GM12878 (cell line): ENCODE measurements at regions of chrX and their contacts with region 1.

Region 1: DNA sequence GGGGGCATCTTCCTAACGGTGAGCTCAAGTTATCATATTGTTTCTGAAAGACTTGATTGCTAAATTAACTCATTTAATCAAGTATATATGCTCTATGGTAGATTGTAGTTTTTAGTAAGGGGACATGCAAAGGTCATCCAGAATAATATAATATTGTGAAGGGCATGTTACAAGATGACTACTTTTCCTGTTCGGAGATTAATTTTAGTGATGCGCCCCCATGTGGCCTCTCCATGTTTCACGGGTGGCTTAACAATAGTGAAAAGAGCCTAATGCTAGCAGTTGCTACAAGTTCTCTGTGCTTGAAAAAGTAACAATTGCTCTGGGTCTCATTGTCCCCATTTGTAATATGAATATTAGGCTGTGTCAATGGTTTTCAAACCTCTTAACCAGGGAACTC is 12.2 kb downstream of the SMPX start:
- DNase-seq: no peak
- ATAC-seq: peak; percentile 79
- H3K4me3 ChIP-seq: no peak overlapping the region
- H3K27ac ChIP-seq: no peak overlapping the region
- H3K4me1 ChIP-seq: no peaks in the 10 kb centered on the region
- H3K27me3 ChIP-seq: no peaks in the 10 kb centered on the region
- CTCF ChIP-seq: peak; percentile 58 to 72 (median 63)
- EP300 ChIP-seq: no peak
- POLR2A ChIP-seq: no peak
- RAD21 ChIP-seq: peak; percentile 56

Region 2: DNA sequence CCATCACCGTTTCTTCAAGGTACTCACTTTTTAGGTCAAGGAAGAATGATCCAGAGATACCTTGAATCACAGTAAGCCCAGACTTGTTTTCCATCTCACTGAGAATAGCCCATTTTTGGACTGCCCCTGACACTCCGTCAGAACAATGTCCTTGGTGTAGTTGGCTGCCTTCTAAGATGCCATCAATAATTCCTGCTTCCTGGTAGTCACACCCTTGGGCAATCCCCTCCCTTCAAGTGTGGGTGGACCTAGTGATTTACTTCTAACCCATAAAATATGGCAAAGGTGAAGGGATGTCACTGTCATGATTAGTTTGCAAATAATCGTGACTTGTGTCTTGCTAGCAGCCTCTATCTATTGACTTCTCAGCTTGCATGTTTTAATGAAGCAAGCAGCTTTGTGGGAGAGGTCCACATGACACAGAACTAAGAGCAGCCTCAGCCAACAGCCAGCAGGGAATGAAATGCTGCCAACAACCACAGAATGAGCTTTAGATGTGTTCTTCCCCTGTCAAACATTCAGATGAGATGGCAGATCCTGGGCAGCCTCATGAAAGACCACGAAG is 67.6 kb before region 1 on chrX:
- CTCF ChIA-PET with region 1: no interaction called
- POLR2A ChIA-PET with region 1: no interaction called
- RAD21 ChIA-PET with region 1: no interaction called
- SMC1A ChIA-PET with region 1: no interaction called
- in situ Hi-C with region 1: no loop called
- intact Hi-C with region 1: no loop called
- DNase-seq: no peak
- ATAC-seq: no peak
- H3K4me3 ChIP-seq: no peak overlapping the region
- H3K27ac ChIP-seq: no peak overlapping the region
- H3K4me1 ChIP-seq: no peaks in the 10 kb centered on the region
- H3K27me3 ChIP-seq: no peaks in the 10 kb centered on the region
- CTCF ChIP-seq: no peak
- EP300 ChIP-seq: no peak
- POLR2A ChIP-seq: no peak
- RAD21 ChIP-seq: no peak

Region 3: DNA sequence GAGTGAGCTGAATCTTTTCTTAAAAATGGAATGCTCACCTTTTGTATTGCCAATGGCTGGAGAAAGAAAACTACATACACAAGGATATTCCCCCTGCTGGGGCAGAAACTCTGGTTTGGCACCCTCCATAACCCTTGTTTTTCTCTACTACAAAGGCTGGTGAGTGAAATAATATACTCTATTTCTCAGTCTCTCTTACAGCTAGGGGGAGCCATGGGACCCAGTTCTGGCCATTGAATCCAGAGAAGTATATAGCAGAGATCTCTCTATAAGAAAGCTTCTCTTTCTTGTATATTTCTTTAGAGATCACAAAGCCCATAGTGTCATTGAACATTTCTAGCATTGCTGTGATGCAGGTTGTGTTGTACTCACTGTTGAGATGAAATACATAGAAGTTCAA is 37.6 kb before region 1 on chrX:
- CTCF ChIA-PET with region 1: interaction called, 10 read pairs
- POLR2A ChIA-PET with region 1: no interaction called
- RAD21 ChIA-PET with region 1: no interaction called
- SMC1A ChIA-PET with region 1: no interaction called
- in situ Hi-C with region 1: no loop called
- intact Hi-C with region 1: no loop called
- DNase-seq: no peak
- ATAC-seq: peak; percentile 67
- H3K4me3 ChIP-seq: no peak overlapping the region
- H3K27ac ChIP-seq: no peak overlapping the region
- H3K4me1 ChIP-seq: no peaks in the 10 kb centered on the region
- H3K27me3 ChIP-seq: no peaks in the 10 kb centered on the region
- CTCF ChIP-seq: peak in 1 of 3 experiments; percentile 10; a peak in 3 of 6 replicates
- EP300 ChIP-seq: no peak
- POLR2A ChIP-seq: no peak
- RAD21 ChIP-seq: 0 out of 2 replicates have a peak, but pooled peaks have one; percentile 24

Region 4: GRCh38 chrX:21756785-21757529 is 11.2 kb after region 1 on chrX:
- CTCF ChIA-PET with region 1: interaction called, 18 read pairs
- POLR2A ChIA-PET with region 1: no interaction called
- RAD21 ChIA-PET with region 1: interaction called, 3 read pairs
- SMC1A ChIA-PET with region 1: interaction called, 3 read pairs
- in situ Hi-C with region 1: no loop called
- intact Hi-C with region 1: no loop called
- DNase-seq: no peak
- ATAC-seq: no peak
- H3K4me3 ChIP-seq: no peak overlapping the region
- H3K27ac ChIP-seq: no peak overlapping the region
- H3K4me1 ChIP-seq: no peaks in the 10 kb centered on the region
- H3K27me3 ChIP-seq: no peaks in the 10 kb centered on the region
- CTCF ChIP-seq: no peak
- EP300 ChIP-seq: no peak
- POLR2A ChIP-seq: no peak
- RAD21 ChIP-seq: no peak